ENCODE measurements at regions of chr1 and their contacts with region 1.

Region 1: DNA sequence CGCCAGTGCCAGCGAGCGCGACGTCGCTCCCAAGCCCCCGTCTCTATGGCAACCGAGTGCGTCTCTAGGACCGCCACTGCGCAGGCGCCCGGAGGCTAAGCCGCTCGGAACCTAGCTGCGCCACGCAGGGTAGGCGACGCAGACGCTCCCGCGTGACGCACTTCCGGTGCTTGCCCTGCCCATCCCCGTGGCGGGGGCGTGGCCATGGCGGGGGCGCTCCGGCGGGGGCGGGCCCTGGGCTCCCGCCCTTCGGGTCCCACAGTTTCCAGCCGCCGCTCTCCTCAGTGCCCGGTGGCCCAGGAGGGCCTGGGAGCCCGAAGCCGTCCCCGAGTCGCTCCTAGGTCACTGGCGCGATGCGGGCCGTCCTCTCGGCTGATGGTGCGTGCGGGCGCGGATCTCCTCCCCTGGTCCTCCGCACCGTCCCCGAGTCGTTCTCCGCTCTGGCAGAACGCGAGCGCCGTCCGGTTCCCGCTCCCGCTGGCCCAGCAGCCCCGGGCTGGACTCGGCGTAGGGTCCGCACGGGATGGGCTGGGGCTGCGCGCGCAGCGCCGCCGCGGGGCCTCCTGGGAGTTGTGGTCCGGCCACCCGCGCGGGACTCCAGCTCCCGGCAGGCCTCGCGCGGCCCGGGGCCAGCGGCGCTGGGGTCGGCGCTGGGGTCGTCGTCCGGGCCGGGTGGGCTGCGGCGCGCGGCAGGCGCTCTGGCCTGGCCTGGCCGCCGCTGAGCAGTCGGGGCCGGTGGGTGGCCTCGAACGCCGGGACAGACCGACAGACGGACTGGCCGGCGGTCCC is at the start of gene MIB2:
- DNase-seq: peak; percentile 94 to 100 (median 98)
- ATAC-seq: peak; percentile 76
- H3K4me3 ChIP-seq: peak within 1 kb of the TSS; percentile 87
- H3K4me3 Mint-ChIP-seq: peak within 1 kb of the TSS; percentile 97
- H3K27ac ChIP-seq: peak within 1 kb of the TSS; percentile 99 to 100
- H3K27ac Mint-ChIP-seq: peak within 1 kb of the TSS; percentile 100
- H3K4me1 ChIP-seq: peaks cover 32% of the 10 kb centered on the region
- H3K4me1 Mint-ChIP-seq: peaks cover 28% of the 10 kb centered on the region
- H3K27me3 ChIP-seq: no peaks in the 10 kb centered on the region
- H3K27me3 Mint-ChIP-seq: no peaks in the 10 kb centered on the region
- CTCF ChIP-seq: no peak
- total RNA-seq, gene MIB2: 58.3 to 59.4 TPM

Region 2: DNA sequence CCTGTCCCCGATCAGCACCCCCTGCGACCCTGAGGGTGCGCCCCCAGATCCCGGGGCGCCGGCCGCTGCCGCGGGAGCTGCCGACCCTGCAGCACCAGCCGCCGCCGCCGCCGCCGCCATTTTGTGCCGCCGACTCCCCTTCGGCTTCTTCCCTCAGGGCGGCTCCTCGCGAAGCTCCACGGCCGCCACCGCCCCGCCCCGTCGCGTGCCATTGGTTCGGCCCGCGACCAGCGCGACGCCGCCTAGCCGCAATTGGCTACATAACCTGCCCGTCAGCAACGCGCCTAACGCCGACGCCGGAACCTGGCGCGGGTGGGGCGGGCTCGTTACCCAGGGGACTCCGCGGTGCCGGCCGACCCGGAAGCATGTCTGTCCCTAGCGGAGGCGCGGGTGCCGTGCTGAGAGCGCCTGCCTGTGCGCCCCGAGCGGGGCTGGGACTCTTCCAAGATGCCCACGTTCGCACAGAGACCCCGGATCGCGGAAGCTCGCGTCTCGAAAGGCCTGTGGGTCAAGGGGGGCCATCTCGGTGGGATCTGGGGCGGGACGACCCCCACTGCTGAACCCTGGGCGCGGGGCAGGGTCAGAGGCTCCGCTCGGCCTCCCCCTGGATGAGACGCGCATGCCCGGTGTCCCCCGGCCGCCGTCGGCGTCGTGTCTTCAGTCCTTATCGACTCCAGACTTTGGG is 216.1 kb before region 1 on chr1 and contains the start of gene CCNL2:
- CTCF ChIA-PET with region 1: no interaction called
- POLR2A ChIA-PET with region 1: interaction called, 12 read pairs
- intact Hi-C with region 1: no loop called
- DNase-seq: peak; percentile 98 to 100 (median 99)
- ATAC-seq: peak; percentile 95
- H3K4me3 ChIP-seq: peak within 1 kb of the TSS; percentile 99
- H3K4me3 Mint-ChIP-seq: peak within 1 kb of the TSS; percentile 92
- H3K27ac ChIP-seq: peak within 1 kb of the TSS; percentile 81 to 89
- H3K27ac Mint-ChIP-seq: peak within 1 kb of the TSS; percentile 86
- H3K4me1 ChIP-seq: peaks cover 47% of the 10 kb centered on the region
- H3K4me1 Mint-ChIP-seq: peaks cover 53% of the 10 kb centered on the region
- H3K27me3 ChIP-seq: no peaks in the 10 kb centered on the region
- H3K27me3 Mint-ChIP-seq: no peaks in the 10 kb centered on the region
- CTCF ChIP-seq: peak; percentile 45
- total RNA-seq, gene CCNL2: 274 to 281 TPM

Region 3: GRCh38 chr1:1511533-1512285 is 103.7 kb before region 1 on chr1 and contains the start of gene ATAD3A:
- CTCF ChIA-PET with region 1: no interaction called
- POLR2A ChIA-PET with region 1: interaction called, 7 read pairs
- intact Hi-C with region 1: loop called in 1 of 2 experiments (anchors 5 kb)
- DNase-seq: peak; percentile 88 to 98 (median 94)
- ATAC-seq: peak; percentile 92
- H3K4me3 ChIP-seq: peak within 1 kb of the TSS; percentile 71
- H3K4me3 Mint-ChIP-seq: peak within 1 kb of the TSS; percentile 99
- H3K27ac ChIP-seq: peak within 1 kb of the TSS; percentile 79 to 88
- H3K27ac Mint-ChIP-seq: peak within 1 kb of the TSS; percentile 95
- H3K4me1 ChIP-seq: peaks cover 16% of the 10 kb centered on the region
- H3K4me1 Mint-ChIP-seq: peaks cover 14% of the 10 kb centered on the region
- H3K27me3 ChIP-seq: no peaks in the 10 kb centered on the region
- H3K27me3 Mint-ChIP-seq: no peaks in the 10 kb centered on the region
- CTCF ChIP-seq: no peak
- total RNA-seq, gene ATAD3A: 17.0 to 19.5 TPM

Region 4: DNA sequence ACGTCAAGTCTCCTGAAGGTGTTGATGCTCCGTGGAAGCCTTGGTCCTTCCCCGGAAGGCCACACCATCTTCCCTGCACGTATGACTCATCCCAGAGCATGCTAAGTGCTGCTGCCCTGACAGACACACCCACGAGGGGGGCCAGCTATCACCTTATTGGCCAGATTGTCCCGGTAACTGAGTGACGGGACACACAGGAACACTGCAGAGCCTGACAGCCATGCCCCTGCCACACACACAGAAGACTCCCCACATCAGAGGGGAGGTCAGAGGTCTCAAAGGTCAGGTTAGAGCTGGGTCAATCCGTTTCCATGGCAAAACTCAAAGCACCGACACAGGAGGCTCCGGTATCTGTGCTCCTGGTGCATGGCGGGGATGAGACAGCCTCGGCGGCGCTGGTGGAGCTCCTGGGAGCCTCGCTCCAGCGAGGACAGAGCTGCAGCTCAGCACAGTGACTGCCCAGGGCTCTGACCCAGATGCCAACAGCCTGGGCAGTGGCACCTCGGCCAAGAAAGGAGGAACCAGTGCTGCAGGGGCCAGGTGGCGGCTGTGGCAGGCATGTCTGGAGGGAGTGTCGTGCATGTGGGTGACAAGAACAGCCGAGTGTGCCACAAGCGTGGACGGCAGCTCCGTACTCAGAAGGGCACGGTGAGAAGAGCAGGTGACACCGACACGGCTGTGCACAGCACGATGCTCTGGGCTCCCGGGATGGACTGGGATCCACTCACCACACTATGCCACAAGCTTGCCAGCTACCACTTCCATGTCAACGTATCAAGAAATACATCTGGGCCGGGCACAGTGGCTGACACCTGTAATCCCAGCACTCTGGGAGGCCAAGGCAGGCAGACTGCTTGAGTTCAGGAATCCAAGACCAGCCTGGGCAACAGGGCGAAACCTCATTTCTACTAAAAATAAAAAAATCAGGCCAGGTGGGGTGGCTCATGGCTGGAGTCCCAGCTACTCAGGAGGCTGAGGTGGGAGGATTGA is 60.2 kb before region 1 on chr1:
- CTCF ChIA-PET with region 1: no interaction called
- POLR2A ChIA-PET with region 1: no interaction called
- intact Hi-C with region 1: no loop called
- DNase-seq: peak in 1 of 14 experiments; percentile 26
- ATAC-seq: no peak
- H3K4me3 ChIP-seq: no peak overlapping the region
- H3K4me3 Mint-ChIP-seq: no peak overlapping the region
- H3K27ac ChIP-seq: no peak overlapping the region
- H3K27ac Mint-ChIP-seq: no peak overlapping the region
- H3K4me1 ChIP-seq: peaks cover 6% of the 10 kb centered on the region
- H3K4me1 Mint-ChIP-seq: peaks cover 3% of the 10 kb centered on the region
- H3K27me3 ChIP-seq: no peaks in the 10 kb centered on the region
- H3K27me3 Mint-ChIP-seq: no peaks in the 10 kb centered on the region
- CTCF ChIP-seq: no peak

Region 5: DNA sequence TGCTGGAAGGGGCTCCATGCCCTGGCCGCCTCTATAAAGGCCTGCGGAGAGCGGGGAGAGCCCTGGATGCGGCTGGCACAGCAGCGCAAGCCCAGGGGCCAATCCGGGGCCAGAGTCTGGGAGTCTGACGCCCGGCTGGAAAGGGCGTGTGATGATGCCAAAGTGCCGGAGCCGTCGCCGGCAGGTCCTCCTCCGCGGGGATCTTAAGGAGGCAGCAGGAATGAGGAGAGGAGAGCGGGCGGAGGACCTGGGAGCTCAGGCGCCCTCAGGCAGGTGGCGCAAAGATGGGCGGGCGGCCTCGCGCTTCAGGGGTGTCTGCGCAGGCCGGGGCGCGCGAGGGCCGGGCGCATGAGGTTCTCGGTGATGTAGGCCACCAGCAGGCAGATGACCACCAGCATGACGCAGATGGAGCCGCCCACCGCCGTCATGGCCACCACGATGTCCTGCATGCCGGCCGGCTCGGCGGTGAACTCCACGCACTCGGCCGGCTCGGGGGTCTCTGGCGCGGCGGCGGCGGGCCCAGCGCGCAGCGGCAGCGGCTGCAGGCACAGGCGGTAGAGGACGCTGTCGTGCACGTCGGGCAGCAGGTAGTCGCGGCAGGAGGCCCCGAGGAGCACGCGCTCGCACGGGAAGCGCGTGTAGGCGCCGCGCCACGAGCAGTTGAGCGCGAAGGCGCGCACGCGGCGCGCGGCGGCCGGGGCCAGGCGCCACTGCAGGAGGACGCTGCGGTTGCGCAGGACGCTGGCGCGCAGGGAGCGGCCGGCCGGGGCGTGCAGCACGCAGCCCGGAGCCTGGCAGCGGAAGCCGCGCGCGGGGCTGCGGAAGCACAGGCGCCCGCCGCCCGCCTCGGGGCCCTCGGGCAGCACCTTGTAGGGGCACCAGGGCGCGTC is 16.2 kb before region 1 on chr1:
- CTCF ChIA-PET with region 1: no interaction called
- POLR2A ChIA-PET with region 1: interaction called, 22 read pairs
- intact Hi-C with region 1: no loop called
- DNase-seq: peak in 10 of 14 experiments; percentile 18 to 78 (median 41)
- ATAC-seq: peak; percentile 59
- H3K4me3 ChIP-seq: no peak overlapping the region
- H3K4me3 Mint-ChIP-seq: peak overlapping the region; percentile 83
- H3K27ac ChIP-seq: no peak overlapping the region
- H3K27ac Mint-ChIP-seq: peak overlapping the region; percentile 33
- H3K4me1 ChIP-seq: peaks cover 25% of the 10 kb centered on the region
- H3K4me1 Mint-ChIP-seq: peaks cover 4% of the 10 kb centered on the region
- H3K27me3 ChIP-seq: peaks cover 0 to 4% of the 10 kb centered on the region in 2 experiments
- H3K27me3 Mint-ChIP-seq: no peaks in the 10 kb centered on the region
- CTCF ChIP-seq: no peak

Region 6: DNA sequence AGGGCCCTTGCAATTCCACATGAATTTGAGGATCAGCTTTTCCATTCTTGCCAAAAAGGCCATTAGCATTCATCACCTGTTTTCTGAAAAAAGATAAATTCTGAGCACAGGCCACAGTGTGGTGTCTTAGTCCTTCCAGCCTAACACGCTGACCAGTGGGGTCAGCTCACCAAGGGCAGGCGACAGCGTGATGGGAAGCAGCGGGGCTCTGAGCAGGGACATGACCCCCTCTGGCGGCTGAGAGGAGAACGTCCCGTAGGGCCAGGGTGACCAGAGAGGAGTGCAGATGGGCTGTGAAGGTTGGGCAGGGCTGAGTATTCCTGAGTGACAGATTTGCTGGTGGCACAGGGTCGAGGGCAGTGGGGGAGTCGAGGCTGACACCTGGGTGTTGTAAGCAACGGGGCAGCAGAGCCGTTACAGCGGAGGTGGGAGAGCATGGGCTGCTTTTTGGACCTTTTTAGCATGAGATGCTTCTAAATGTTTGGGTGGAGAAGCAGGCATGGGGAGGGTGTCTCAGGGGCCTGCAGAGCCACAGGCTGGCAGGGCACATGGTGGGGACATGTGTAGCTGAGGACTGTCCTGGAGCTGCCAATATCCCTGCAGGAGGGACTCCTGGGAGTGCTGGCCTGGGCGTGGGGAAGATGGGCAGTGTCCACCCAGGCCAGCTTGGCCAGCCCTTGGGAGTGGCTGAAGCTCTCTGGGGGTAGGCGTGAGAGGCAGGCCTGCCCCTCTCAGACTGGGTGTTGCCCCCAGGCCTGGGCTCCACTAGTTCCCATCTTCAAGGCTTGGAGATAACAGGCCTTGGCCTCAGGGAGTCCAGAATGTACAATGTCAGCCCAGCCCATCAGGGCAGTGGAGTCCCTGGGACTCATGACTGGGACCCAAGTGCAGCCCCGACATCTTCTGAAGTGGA is 291.0 kb after region 1 on chr1:
- CTCF ChIA-PET with region 1: interaction called, 4 read pairs
- POLR2A ChIA-PET with region 1: interaction called, 7 read pairs
- intact Hi-C with region 1: loop called in 1 of 2 experiments (anchors 5 kb)
- DNase-seq: peak; percentile 46 to 84 (median 58)
- ATAC-seq: peak; percentile 19
- H3K4me3 ChIP-seq: no peak overlapping the region
- H3K4me3 Mint-ChIP-seq: peak overlapping the region; percentile 86
- H3K27ac ChIP-seq: no peak overlapping the region
- H3K27ac Mint-ChIP-seq: peak overlapping the region; percentile 65
- H3K4me1 ChIP-seq: peaks cover 30% of the 10 kb centered on the region
- H3K4me1 Mint-ChIP-seq: peaks cover 6% of the 10 kb centered on the region
- H3K27me3 ChIP-seq: no peaks in the 10 kb centered on the region
- H3K27me3 Mint-ChIP-seq: no peaks in the 10 kb centered on the region
- CTCF ChIP-seq: peak; percentile 84

Region 7: DNA sequence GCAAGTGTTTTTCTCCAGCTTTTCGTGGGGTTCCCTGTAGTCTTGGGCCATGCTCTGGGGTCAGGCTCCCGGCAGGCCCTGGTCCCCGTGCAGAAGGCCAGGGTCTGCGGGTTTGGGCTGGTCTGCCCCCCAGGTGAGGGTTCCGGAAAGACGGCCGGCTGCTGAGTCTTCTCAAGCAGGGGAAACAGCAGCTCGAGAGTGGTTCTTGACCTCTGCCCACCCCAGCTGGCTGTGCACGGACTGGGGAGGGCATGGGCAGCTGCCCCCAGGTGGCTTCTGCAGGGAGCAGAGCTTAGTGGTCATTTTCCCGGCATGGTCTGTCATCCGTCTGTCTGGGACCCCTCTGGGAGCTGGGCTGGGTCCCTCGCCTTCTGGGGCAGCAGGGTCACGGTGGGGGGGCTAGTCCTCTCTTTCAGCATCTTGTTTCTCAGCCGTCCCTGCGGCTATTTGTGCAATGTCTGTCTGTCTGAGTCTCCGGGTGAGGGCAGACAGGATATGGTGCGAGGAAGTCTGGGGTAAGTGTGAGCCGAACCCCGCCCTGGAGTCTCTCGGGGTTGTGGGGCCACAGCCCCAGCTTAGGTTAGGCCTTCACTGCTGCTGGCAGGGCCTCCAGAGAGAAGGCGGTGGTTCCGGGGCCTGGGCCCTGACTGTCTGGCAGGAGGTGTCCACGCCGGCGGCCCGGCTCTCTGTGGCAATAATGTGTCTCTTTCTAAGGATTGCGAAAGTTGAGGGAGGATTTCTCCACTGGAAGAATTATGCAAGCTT is 618.7 kb after region 1 on chr1:
- CTCF ChIA-PET with region 1: no interaction called
- POLR2A ChIA-PET with region 1: no interaction called
- intact Hi-C with region 1: no loop called
- DNase-seq: peak; percentile 62 to 93 (median 80)
- ATAC-seq: peak; percentile 49
- H3K4me3 ChIP-seq: peak overlapping the region; percentile 95
- H3K4me3 Mint-ChIP-seq: peak overlapping the region; percentile 99
- H3K27ac ChIP-seq: peak overlapping the region; percentile 80 to 92
- H3K27ac Mint-ChIP-seq: peak overlapping the region; percentile 100
- H3K4me1 ChIP-seq: peaks cover 99% of the 10 kb centered on the region
- H3K4me1 Mint-ChIP-seq: peaks cover 71% of the 10 kb centered on the region
- H3K27me3 ChIP-seq: no peaks in the 10 kb centered on the region
- H3K27me3 Mint-ChIP-seq: peaks cover 20% of the 10 kb centered on the region
- CTCF ChIP-seq: no peak

Measured in CD4-positive, alpha-beta T cell (primary cell).